ENCODE measurements at regions of chr2 and their contacts with region 1.

Region 1: DNA sequence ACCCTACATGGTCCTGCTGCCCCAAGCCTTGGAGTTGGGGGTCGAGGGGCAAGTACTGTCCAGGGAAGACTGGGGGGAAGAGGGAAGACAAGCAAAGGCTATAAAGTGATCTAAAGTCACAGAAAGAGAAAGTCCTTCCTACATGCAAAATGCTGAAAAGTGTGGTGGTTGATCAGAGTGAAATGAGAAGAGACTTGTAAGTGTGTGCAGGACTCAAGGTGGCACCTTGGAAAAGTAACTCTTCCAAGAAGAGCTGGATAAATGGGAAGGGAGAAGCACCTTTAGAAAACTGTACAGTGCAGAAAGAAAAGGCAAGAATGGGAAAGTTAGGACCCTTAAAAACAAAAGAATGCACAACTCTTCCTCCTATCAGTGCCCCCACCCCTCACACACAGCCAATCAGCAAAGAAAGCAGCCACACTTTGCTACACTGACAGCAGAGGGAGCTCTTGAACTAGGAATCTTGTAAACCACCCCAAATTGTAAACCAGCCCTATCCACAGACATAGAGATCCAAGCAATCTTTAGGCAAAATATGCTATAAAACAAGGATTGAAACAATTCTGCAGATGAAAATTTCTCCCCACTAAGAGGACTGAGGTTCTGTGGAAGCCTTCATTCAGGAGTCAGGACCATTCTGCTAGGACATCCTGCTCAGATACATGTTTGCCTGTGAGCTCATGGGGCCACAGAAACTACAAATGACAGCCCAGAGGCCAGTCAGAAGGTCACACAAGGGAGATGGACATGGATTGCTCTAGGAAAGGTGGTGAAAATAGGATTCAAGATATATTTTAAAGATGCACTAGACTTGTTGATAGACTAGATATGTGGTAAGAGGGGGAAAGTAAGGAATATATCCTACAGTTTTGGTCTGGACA is 146.4 kb downstream of the FTCDNL1 start:
- DNase-seq: peak; percentile 39
- H3K4me3 Mint-ChIP-seq: no peak overlapping the region
- H3K27ac Mint-ChIP-seq: no peak overlapping the region
- H3K4me1 Mint-ChIP-seq: no peaks in the 10 kb centered on the region
- H3K27me3 Mint-ChIP-seq: peaks cover 4% of the 10 kb centered on the region

Region 2: GRCh38 chr2:199378948-199379650 is 325.5 kb before region 1 on chr2:
- CTCF ChIA-PET with region 1: no interaction called
- DNase-seq: no peak
- H3K4me3 Mint-ChIP-seq: no peak overlapping the region
- H3K27ac Mint-ChIP-seq: no peak overlapping the region
- H3K4me1 Mint-ChIP-seq: no peaks in the 10 kb centered on the region
- H3K27me3 Mint-ChIP-seq: peaks cover 11% of the 10 kb centered on the region

Region 3: GRCh38 chr2:199739413-199740110 is 35.0 kb after region 1 on chr2:
- CTCF ChIA-PET with region 1: interaction called, 17 read pairs
- DNase-seq: peak; percentile 73
- H3K4me3 Mint-ChIP-seq: no peak overlapping the region
- H3K27ac Mint-ChIP-seq: no peak overlapping the region
- H3K4me1 Mint-ChIP-seq: peaks cover 4% of the 10 kb centered on the region
- H3K27me3 Mint-ChIP-seq: peaks cover 9% of the 10 kb centered on the region

Region 4: DNA sequence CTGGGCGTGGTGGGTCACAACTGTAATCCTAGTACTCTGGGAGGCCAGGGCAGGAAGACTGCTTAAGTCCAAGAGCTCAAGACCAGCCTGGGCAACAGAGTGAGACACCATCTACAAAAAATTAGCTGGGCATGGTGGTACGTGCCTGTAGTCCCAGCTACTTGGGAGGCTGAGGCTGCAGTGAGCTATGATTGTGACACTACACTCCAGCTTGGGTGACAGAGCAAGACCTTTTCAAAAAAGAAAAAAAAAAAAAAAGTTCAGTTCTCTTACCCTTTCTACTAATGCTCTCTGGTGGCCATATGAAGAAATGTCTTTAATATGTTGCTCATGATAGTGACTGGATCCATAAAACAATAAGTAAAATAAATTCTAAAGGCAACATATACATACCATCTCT is 235.8 kb after region 1 on chr2:
- CTCF ChIA-PET with region 1: interaction called, 11 read pairs
- DNase-seq: no peak
- H3K4me3 Mint-ChIP-seq: no peak overlapping the region
- H3K27ac Mint-ChIP-seq: no peak overlapping the region
- H3K4me1 Mint-ChIP-seq: peaks cover 3% of the 10 kb centered on the region
- H3K27me3 Mint-ChIP-seq: no peaks in the 10 kb centered on the region

Measured in activated naive CD4-positive, alpha-beta T cell treated with anti-CD3 and anti-CD28 coated beads, Interleukin-2, amount 10 ng/mL, durations not matched to agents 7 days and 5 days (primary cell).